ENCODE measurements at regions of chr1 and their contacts with region 1.

Region 1: DNA sequence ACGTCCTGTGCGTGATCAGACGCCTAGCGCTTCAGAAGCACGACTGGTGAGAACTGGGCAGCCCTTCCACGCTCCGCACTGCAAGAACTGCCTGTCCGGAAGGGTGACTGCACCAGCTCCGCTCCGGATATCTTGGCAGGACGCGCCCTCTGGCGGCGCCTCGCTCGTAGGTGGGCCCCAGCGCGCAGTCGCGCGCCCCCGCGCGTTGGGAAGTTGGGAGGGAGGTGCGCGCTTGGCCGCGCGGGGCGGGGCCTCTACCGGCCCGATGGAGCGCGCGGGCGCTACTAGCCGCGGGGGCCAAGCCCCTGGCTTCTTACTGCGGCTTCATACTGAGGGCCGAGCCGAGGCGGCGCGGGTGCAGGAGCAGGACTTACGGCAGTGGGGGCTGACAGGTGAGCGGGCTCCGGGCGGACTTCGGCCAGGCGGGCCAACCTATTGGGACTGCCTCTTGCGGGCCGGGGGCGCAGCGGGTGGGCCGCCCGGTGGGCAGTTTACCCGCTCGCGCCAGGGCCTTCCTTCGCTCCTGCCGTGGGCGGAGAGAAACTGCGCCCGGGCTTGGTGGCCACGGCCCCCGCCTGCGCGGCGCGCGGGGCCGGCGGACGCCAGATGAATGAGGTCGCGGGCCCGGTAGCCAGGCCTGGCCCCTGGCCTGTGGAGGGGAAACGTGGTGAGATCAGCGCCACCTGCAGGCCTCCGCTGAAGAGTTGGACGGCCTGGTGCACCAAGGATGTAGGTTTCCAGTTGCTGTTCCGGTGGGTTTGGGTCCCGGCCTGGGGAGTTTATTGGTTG is at the start of gene CHD1L:
- DNase-seq: peak; percentile 93 to 99 (median 96)
- ATAC-seq: peak; percentile 96
- H3K4me3 ChIP-seq: peak within 1 kb of the TSS; percentile 85 to 94
- H3K27ac ChIP-seq: peak within 1 kb of the TSS; percentile 90 to 93
- H3K4me1 ChIP-seq: peaks cover 8 to 54% of the 10 kb centered on the region in 2 donors
- H3K27me3 ChIP-seq: no peaks in the 10 kb centered on the region
- CTCF ChIP-seq: peak; percentile 68 to 89
- polyA plus RNA-seq, gene CHD1L: 55.5 to 72.0 (median 62.3) TPM

Region 2: DNA sequence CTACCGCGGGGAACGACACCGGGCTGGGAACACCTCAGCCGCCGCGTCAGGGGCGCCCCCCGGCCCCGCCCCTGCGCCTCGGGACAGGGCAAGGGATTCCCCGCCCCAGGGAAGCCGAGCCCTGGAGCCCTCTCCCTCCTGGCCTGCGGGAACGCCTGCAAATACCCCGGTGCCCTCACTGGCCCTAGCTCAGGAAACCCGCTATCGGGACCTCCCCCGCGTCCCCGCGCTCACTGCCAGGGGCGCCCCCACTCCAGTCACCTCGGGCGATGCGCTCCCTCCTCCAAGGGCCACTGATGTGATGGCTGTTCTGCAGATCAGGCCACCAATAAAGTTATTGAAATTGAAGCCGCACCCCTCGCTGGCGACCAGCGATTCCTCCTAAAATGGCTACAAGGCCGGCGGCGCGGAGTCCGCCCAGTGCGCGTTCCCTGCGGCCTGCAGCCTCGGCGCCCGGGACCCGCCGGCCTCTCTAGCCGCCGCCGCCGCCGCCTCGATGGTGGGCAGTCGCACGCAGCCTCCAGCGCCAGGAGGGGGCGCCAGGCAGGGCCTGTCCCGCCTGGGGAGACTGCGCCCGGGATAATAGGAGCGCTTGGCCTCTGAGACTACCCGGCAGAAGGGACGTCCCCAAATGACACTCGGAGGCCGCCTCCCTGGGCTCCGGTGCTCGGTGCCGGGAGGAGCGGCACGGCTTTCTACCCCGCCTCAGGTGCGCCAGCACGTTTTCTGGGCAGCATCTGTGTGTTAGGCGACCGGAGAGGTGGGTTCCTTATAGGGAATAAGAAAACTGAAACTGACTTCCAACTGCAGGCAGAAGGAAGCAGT is 70.3 kb before region 1 on chr1 and contains the start of gene PRKAB2:
- intact Hi-C with region 1: loop called in 1 of 2 experiments (anchors 5 kb)
- DNase-seq: peak; percentile 91 to 99 (median 96)
- ATAC-seq: peak; percentile 98
- H3K4me3 ChIP-seq: peak within 1 kb of the TSS; percentile 93 to 98
- H3K27ac ChIP-seq: peak within 1 kb of the TSS; percentile 97 to 98
- H3K4me1 ChIP-seq: peaks cover 9 to 34% of the 10 kb centered on the region in 2 donors
- H3K27me3 ChIP-seq: no peaks in the 10 kb centered on the region
- CTCF ChIP-seq: peak; percentile 74 to 96
- polyA plus RNA-seq, gene PRKAB2: 28.0 to 42.7 (median 33.3) TPM